ENCODE measurements at regions of chr1 and their contacts with region 1.

Region 1: DNA sequence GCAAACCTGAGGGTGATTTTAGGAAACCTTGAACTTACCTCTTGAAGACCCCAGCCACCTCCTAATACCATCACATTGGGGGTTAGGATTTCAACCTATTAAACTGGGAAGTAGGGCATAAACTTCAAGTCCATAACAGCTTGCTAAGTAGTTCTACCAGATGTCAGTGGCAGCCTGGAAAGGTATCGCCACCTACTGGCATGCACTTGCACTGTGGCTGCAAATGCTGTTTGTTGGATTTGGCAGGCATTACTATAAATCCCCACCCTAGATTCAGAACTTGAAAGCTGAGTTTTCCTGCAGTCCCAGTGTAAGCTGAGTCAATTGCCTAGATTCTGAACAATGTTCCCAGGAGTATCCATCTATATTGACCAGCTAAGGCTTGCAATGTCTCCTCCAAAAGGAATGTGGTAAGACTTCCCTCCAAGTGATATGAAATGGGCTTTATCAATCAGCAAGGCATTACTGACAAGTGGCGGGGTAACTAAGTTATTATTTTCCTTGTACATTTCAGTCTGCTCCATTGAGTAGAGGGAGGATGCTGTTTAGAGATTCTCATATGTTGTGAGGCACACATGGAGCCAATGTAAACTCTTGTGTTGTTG is 474.5 kb downstream of the PTPRC start:
- DNase-seq: peak; percentile 79
- ATAC-seq: peak; percentile 70
- H3K4me3 Mint-ChIP-seq: no peak overlapping the region
- H3K27ac Mint-ChIP-seq: no peak overlapping the region
- H3K4me1 Mint-ChIP-seq: no peaks in the 10 kb centered on the region
- H3K27me3 Mint-ChIP-seq: no peaks in the 10 kb centered on the region

Region 2: GRCh38 chr1:198771563-198772153 is 341.7 kb before region 1 on chr1:
- CTCF ChIA-PET with region 1: interaction called, 6 read pairs
- POLR2A ChIA-PET with region 1: no interaction called
- intact Hi-C with region 1: loop called (anchors 1 to 2 kb)
- DNase-seq: peak; percentile 24
- ATAC-seq: peak; percentile 70
- H3K4me3 Mint-ChIP-seq: no peak overlapping the region
- H3K27ac Mint-ChIP-seq: no peak overlapping the region
- H3K4me1 Mint-ChIP-seq: peaks cover 6% of the 10 kb centered on the region
- H3K27me3 Mint-ChIP-seq: no peaks in the 10 kb centered on the region

Region 3: GRCh38 chr1:199123615-199124014 is 10.2 kb after region 1 on chr1:
- CTCF ChIA-PET with region 1: interaction called, 16 read pairs
- POLR2A ChIA-PET with region 1: no interaction called
- intact Hi-C with region 1: no loop called
- DNase-seq: no peak
- ATAC-seq: no peak
- H3K4me3 Mint-ChIP-seq: no peak overlapping the region
- H3K27ac Mint-ChIP-seq: no peak overlapping the region
- H3K4me1 Mint-ChIP-seq: peaks cover 4% of the 10 kb centered on the region
- H3K27me3 Mint-ChIP-seq: no peaks in the 10 kb centered on the region

Region 4: GRCh38 chr1:199463521-199464128 is 350.3 kb after region 1 on chr1:
- CTCF ChIA-PET with region 1: interaction called, 4 read pairs
- POLR2A ChIA-PET with region 1: no interaction called
- intact Hi-C with region 1: loop called in 1 of 2 experiments (anchors 10 kb)
- DNase-seq: peak; percentile 51
- ATAC-seq: peak; percentile 60
- H3K4me3 Mint-ChIP-seq: no peak overlapping the region
- H3K27ac Mint-ChIP-seq: no peak overlapping the region
- H3K4me1 Mint-ChIP-seq: no peaks in the 10 kb centered on the region
- H3K27me3 Mint-ChIP-seq: peaks cover 3% of the 10 kb centered on the region

Measured in activated CD4-positive, alpha-beta T cell treated with anti-CD3 and anti-CD28 coated beads for 36 hours (primary cell).